Activated T-helper 1 cell treated with anti-CD3 and anti-CD28 coated beads, Interleukin-12 subunit alpha, Interleukin-12 subunit beta, Interleukin-2, Interleukin-4 antibody, amounts not matched to agents 30 ng/mL and 10 ng/mL and 1 ng/mL, durations not matched to agents 14 hours and 24 hours and 36 hours (primary cell): ENCODE measurements at regions of chr12 and their contacts with region 1.

Region 1: DNA sequence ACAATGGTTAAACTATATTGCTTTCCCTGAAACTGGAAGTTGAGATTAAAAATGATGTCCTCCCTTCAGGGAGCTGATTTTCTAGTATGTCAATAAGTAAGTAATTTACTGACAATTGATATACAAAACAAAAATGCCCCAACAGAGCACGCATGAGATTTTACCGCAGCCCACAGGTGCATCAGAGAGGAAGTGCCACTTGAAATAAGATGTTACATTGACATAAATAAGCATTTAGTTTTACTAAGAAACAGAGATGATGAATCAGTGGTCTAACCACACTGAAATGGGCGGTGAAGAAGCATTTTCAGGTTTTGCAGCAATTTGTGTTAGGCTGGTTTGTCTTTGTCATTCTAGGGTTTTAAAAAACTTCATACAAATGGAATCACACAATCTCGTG is 8.8 kb upstream of the CLECL1 start:
- DNase-seq: peak; percentile 81
- H3K4me3 Mint-ChIP-seq: peak overlapping the region; percentile 70
- H3K27ac Mint-ChIP-seq: peak overlapping the region; percentile 86
- H3K4me1 Mint-ChIP-seq: peaks cover 72% of the 10 kb centered on the region
- H3K27me3 Mint-ChIP-seq: no peaks in the 10 kb centered on the region

Region 2: GRCh38 chr12:9331218-9331626 is 410.5 kb before region 1 on chr12:
- intact Hi-C with region 1: loop called (anchors 5 kb)
- DNase-seq: peak; percentile 47
- H3K4me3 Mint-ChIP-seq: no peak overlapping the region
- H3K27ac Mint-ChIP-seq: no peak overlapping the region
- H3K4me1 Mint-ChIP-seq: peaks cover 20% of the 10 kb centered on the region
- H3K27me3 Mint-ChIP-seq: peaks cover under 1% of the 10 kb centered on the region

Region 3: DNA sequence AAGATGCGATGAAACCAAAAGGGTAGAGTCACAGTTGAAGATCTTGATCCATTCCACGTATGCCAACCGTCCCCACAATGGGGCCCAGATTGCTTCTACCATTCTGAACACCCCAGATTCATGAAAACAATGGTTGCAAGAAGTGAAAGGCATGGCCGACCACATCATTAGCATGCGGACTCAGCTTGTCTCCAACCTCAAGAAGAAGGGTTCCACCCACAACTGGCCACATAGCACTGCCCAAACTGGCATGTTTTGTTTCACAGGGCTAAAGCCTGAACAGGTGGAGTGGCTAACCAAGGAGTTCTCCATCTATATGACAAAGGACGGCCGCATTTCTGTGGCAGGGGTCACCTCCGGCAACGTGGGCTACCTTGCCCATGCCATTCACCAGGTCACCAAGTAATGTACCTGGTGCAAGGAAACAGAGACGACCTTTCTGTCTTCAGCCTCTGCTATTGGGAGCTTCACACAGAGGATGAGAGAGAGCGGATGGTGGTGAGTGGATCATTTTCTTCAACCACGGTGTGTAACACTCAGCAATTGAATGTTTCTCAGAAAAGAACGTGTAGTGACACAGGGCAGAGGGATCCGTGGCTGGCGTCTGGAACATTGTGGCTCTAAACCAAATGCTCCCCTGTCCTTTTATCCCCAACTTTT is 99.0 kb before region 1 on chr12:
- intact Hi-C with region 1: no loop called
- DNase-seq: no peak
- H3K4me3 Mint-ChIP-seq: peak overlapping the region; percentile 12
- H3K27ac Mint-ChIP-seq: peak overlapping the region; percentile 69
- H3K4me1 Mint-ChIP-seq: peaks cover 83% of the 10 kb centered on the region
- H3K27me3 Mint-ChIP-seq: no peaks in the 10 kb centered on the region

Region 4: GRCh38 chr12:9667403-9668160 is 74.1 kb before region 1 on chr12:
- intact Hi-C with region 1: loop called (anchors 1 kb)
- DNase-seq: no peak
- H3K4me3 Mint-ChIP-seq: peak overlapping the region; percentile 90
- H3K27ac Mint-ChIP-seq: peak overlapping the region; percentile 97
- H3K4me1 Mint-ChIP-seq: peaks cover 60% of the 10 kb centered on the region
- H3K27me3 Mint-ChIP-seq: no peaks in the 10 kb centered on the region

Region 5: DNA sequence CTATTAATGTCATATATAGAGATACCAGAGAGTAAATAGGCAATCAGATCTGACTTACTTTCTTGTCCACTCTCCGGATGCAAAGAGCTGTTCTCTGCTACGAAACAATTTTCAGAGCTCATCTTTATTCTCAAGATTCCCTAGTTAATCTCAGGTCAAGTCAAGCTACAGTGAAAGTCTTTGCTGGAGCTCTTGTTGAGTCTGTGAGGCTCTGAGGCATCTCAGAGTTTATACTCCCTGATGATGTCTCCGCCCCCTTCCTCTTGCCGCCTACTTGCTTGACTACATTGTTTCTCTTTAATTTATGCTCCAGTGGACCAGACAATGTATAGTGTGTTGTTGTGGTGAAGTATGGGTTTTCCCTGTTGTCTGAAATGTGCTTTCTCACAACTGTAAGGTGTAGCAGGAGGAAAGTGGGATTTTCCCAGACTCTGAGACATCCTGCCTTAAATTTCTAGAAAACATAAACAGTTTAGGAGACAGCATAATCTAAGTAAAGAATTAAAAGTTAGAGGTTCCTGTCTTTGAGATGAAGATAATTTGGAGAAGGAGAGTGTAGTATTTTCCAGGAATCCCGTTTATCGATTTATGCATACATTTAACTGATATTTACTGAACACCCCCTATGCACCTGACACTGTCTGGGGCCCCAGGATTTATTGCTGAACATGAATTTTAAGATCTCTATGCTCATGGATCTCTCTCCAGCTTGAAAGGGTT is 19.1 kb after region 1 on chr12 and contains the start of gene CD69:
- intact Hi-C with region 1: loop called (anchors 1 kb)
- DNase-seq: peak; percentile 81
- H3K4me3 Mint-ChIP-seq: peak within 1 kb of the TSS; percentile 98
- H3K27ac Mint-ChIP-seq: peak within 1 kb of the TSS; percentile 97
- H3K4me1 Mint-ChIP-seq: peaks cover 68% of the 10 kb centered on the region
- H3K27me3 Mint-ChIP-seq: peaks cover 6% of the 10 kb centered on the region
- total RNA-seq, gene CD69: 90.5 and 93.2 TPM in 2 replicates

Region 6: DNA sequence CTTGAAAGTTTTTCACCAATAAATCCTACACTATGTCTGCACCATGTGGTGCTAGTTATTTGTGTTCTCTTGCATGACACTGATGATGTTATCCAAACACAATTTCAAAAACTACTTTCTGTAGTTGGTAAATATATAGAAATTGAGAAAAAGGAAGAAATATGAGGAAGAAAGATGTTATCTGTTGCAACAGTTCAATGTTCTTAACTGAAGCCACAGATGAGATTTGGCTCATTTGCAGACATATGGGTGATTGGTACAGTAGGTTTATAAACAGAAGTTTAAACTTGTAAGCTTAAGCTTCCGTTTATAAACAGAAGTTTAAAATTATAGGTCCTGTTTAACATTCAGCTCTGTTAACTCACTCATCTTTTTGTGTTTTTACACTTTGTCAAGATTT is 229.5 kb after region 1 on chr12 and contains the start of gene CLEC12A:
- intact Hi-C with region 1: no loop called
- DNase-seq: no peak
- H3K4me3 Mint-ChIP-seq: no peak within 1 kb of the TSS
- H3K27ac Mint-ChIP-seq: no peak within 1 kb of the TSS
- H3K4me1 Mint-ChIP-seq: no peaks in the 10 kb centered on the region
- H3K27me3 Mint-ChIP-seq: peaks cover 23% of the 10 kb centered on the region
- total RNA-seq, gene CLEC12A: not detected in 2 replicates

Region 7: DNA sequence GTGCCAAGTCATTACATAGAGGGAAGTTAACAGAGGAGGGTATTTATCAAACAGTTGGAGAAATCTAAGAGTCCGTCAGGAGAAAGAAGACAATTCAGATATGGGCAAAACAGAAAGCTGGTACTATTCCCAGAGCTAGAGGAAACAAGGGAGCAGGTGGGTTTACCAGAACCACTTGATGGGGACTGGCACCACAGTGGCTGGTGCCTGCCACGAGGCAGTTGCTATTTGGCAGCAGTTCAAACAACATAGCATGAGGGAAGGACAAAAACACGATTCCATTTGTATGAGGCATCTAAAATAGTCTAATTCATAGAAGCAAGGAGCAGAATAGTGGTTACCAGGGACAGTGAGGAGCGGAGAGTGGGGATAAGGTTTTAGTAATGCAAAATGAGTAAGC is 541.3 kb after region 1 on chr12:
- intact Hi-C with region 1: no loop called
- DNase-seq: no peak
- H3K4me3 Mint-ChIP-seq: no peak overlapping the region
- H3K27ac Mint-ChIP-seq: no peak overlapping the region
- H3K4me1 Mint-ChIP-seq: peaks cover 5% of the 10 kb centered on the region
- H3K27me3 Mint-ChIP-seq: peaks cover 18% of the 10 kb centered on the region

Region 8: DNA sequence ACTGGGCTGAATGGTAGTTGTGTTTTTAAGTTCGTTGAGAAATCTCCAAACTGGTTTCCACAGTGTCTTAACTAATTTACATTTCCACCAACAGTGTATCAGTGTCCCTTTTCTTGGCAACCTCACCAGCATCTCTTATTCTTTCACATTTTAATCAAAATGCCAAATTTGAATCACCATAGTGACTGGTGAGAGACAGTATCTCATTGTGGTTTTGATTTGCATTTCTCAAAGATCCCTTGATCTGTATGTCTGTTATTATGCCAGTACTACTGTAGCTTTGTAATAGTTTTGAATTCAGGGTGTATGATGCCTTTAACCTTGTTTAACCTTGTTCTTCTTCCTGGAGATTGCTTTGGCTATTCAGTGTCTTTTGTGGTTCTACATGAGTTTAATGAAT is 761.7 kb after region 1 on chr12:
- intact Hi-C with region 1: no loop called
- DNase-seq: no peak
- H3K4me3 Mint-ChIP-seq: no peak overlapping the region
- H3K27ac Mint-ChIP-seq: no peak overlapping the region
- H3K4me1 Mint-ChIP-seq: peaks cover 8% of the 10 kb centered on the region
- H3K27me3 Mint-ChIP-seq: peaks cover 11% of the 10 kb centered on the region

Region 9: GRCh38 chr12:10562306-10562933 is 820.7 kb after region 1 on chr12:
- intact Hi-C with region 1: loop called (anchors 5 kb)
- DNase-seq: no peak
- H3K4me3 Mint-ChIP-seq: no peak overlapping the region
- H3K27ac Mint-ChIP-seq: no peak overlapping the region
- H3K4me1 Mint-ChIP-seq: peaks cover 4% of the 10 kb centered on the region
- H3K27me3 Mint-ChIP-seq: peaks cover 38% of the 10 kb centered on the region